ENCODE measurements at regions of chr5 and their contacts with region 1.

Region 1: DNA sequence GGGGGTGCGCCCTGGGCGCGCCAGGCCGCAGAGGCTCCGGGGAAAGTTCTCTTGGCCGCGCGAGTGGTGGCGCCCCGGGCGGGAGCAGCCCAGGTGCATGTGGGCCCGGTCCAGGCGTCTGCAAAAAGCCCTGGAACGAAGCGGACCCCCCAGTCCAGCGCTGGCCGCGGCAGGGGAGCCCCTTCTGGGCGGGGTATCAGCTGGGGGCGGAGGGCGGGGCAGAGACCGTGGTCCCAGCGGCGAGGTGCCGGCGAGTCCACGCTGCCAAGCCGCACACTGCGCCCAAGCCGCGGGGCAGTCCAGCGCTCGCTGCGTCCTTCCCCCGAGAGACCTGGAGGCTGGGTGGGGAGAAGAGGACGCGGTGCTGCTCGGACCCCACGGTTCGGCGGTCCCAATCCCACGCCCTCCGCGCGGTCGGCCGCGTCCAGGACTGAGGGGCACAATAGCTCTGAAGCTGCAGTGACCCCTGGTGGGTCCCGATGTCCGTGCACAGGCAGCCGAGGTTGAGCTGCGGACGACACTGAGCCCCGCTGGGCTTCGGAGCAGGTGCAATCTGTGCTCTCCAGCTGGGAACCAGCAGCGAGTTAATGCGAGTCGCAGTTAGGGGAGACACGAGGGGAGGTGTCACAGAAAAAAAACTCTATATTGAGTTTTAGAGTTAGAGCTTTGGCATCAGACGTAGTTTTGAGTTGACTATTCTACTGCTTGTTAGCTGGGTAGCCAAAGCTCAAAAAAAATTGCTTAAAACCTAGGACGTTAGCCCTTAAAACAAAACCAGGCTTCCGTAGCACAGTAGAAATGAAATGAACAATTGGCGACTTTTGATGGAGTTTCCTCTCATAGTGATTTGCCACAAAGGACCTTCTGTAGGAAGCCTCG is 1.1 kb upstream of the EPB41L4A start:
- DNase-seq: peak; percentile 70
- H3K4me3 Mint-ChIP-seq: peak overlapping the region; percentile 77
- H3K27ac Mint-ChIP-seq: no peak overlapping the region
- H3K4me1 Mint-ChIP-seq: no peaks in the 10 kb centered on the region
- H3K27me3 Mint-ChIP-seq: no peaks in the 10 kb centered on the region
- CTCF ChIP-seq: peak; percentile 91

Region 2: GRCh38 chr5:112186401-112186990 is 233.7 kb before region 1 on chr5:
- CTCF ChIA-PET with region 1: interaction called, 8 read pairs
- POLR2A ChIA-PET with region 1: interaction called, 11 read pairs
- intact Hi-C with region 1: loop called (anchors 1 kb)
- DNase-seq: peak; percentile 56
- H3K4me3 Mint-ChIP-seq: no peak overlapping the region
- H3K27ac Mint-ChIP-seq: no peak overlapping the region
- H3K4me1 Mint-ChIP-seq: peaks cover 10% of the 10 kb centered on the region
- H3K27me3 Mint-ChIP-seq: no peaks in the 10 kb centered on the region
- CTCF ChIP-seq: peak; percentile 48

Region 3: GRCh38 chr5:112210430-112211005 is 209.7 kb before region 1 on chr5:
- CTCF ChIA-PET with region 1: interaction called, 73 read pairs
- POLR2A ChIA-PET with region 1: interaction called, 43 read pairs
- intact Hi-C with region 1: loop called (anchors 1 kb)
- DNase-seq: peak; percentile 63
- H3K4me3 Mint-ChIP-seq: no peak overlapping the region
- H3K27ac Mint-ChIP-seq: no peak overlapping the region
- H3K4me1 Mint-ChIP-seq: peaks cover 6% of the 10 kb centered on the region
- H3K27me3 Mint-ChIP-seq: no peaks in the 10 kb centered on the region
- CTCF ChIP-seq: peak; percentile 69

Region 4: GRCh38 chr5:112253478-112254250 is 166.6 kb before region 1 on chr5:
- CTCF ChIA-PET with region 1: interaction called, 5 read pairs
- POLR2A ChIA-PET with region 1: interaction called, 17 read pairs
- intact Hi-C with region 1: no loop called
- DNase-seq: peak; percentile 89
- H3K4me3 Mint-ChIP-seq: no peak overlapping the region
- H3K27ac Mint-ChIP-seq: no peak overlapping the region
- H3K4me1 Mint-ChIP-seq: peaks cover 36% of the 10 kb centered on the region
- H3K27me3 Mint-ChIP-seq: no peaks in the 10 kb centered on the region
- CTCF ChIP-seq: no peak

Region 5: DNA sequence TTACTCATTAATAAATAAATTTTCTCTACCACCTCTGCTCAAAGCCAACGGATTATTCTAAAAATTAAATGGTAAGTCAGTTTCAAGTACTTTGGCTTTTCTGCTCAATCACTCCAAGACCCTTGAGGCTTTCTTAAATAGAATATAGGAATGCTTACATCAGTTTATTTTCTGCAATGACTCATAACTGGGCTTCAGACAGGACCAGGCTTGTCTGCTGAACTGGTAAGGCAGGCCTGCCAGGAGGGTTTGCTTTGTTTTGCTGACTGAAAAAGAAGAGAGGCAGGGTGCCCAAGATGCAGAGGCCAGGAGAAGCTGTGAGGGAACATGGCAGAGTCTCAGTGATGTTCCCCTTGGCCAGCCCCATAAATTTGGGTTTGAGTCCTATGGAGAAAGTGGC is 59.2 kb after region 1 on chr5:
- CTCF ChIA-PET with region 1: interaction called, 12 read pairs
- POLR2A ChIA-PET with region 1: interaction called, 5 read pairs
- intact Hi-C with region 1: no loop called
- DNase-seq: peak; percentile 75
- H3K4me3 Mint-ChIP-seq: no peak overlapping the region
- H3K27ac Mint-ChIP-seq: peak overlapping the region; percentile 47
- H3K4me1 Mint-ChIP-seq: peaks cover 11% of the 10 kb centered on the region
- H3K27me3 Mint-ChIP-seq: no peaks in the 10 kb centered on the region
- CTCF ChIP-seq: no peak

Region 6: GRCh38 chr5:112757468-112758208 is 337.4 kb after region 1 on chr5:
- CTCF ChIA-PET with region 1: interaction called, 10 read pairs
- POLR2A ChIA-PET with region 1: no interaction called
- intact Hi-C with region 1: loop called (anchors 5 kb)
- DNase-seq: peak; percentile 61
- H3K4me3 Mint-ChIP-seq: no peak overlapping the region
- H3K27ac Mint-ChIP-seq: no peak overlapping the region
- H3K4me1 Mint-ChIP-seq: peaks cover 21% of the 10 kb centered on the region
- H3K27me3 Mint-ChIP-seq: no peaks in the 10 kb centered on the region
- CTCF ChIP-seq: peak; percentile 68

Measured in MCF 10A (cell line).